HEK293 (cell line): ENCODE measurements at regions of chr17 and their contacts with region 1.

Region 1: DNA sequence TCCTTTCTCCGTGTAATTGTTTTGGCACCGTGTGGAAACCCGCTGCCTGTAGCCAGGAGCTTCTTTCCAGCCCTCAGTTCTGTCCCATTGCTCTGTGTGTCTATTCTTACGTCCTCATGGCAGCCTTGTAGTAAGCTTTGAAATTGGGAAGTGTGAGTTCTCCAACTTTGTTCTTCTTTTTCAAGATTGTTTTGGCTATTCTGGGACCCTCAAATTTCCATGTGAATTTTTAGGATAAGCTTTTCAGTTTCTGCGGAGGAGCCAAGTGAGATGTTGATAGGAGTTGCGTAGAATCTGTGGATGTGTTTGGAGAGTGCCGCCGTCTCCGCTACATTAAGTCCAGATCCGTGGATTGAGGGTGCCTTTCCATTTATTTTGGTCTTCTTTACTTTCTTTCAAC is 15.2 kb downstream of the CHMP6 start:
- H3K4me3 ChIP-seq: no peak overlapping the region
- H3K27ac ChIP-seq: no peak overlapping the region
- H3K4me1 ChIP-seq: peaks cover 9% of the 10 kb centered on the region
- CTCF ChIP-seq: no peak

Region 2: DNA sequence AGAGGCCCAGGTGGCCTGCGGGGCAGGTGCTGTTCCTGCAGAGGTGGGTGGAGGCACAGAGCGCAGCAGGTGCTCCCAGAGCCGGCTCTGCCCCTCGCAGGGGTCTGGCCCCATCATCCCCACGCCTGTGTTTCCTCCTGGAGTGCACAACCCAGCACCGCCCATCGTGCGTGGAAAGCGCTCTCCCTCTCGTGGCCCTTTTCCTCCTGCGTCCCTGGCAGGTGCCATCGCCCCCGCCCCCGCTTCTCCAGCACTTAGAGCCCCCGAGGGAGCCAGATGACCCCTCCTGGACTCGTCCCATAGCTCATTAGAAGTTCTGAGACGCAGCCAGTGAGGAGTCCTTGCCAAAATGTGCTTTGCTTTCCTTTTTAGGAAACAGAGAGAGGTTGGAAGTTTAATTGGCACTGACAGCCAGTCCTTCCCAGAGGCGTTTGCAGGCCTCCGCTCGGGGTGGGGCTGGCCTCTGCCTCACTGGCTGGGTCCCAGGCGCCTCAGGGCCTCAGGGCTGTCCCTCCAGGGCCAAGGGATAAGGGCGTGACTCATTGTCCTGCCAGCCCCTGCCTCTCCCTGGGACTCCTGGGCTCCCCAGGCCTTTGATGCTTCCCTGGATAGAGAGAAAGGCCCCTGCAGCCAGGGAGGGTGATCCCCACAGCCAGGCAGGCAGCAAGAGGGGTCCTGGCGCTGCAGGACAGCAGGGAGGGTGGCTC is 47.4 kb before region 1 on chr17:
- CTCF ChIA-PET with region 1: no interaction called
- POLR2A ChIA-PET with region 1: no interaction called
- H3K4me3 ChIP-seq: no peak overlapping the region
- H3K27ac ChIP-seq: no peak overlapping the region
- H3K4me1 ChIP-seq: no peaks in the 10 kb centered on the region; the same call in 1 of the 2 replicates
- CTCF ChIP-seq: no peak

Region 3: DNA sequence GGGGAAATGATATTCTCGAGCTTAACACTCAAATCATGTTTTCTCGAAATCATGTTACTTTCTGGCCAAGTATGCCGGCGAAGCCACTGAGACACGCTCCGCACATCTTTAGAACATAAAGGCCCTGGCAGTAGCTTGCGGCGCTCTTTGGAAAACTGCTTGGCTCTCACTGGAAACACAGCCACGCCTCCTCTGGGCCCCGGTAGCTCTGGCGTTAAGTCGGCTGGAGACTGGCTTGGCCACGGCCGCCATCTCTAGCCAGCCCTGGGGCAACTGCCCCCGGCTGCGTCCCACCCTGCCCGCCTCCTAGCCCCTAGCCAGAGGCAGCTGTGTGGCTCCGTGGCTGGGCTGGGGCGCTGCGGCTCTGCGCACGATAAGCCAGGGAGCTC is 18.8 kb after region 1 on chr17:
- CTCF ChIA-PET with region 1: interaction called, 20 read pairs
- POLR2A ChIA-PET with region 1: interaction called, 6 read pairs
- H3K4me3 ChIP-seq: no peak overlapping the region
- H3K27ac ChIP-seq: no peak overlapping the region
- H3K4me1 ChIP-seq: no peaks in the 10 kb centered on the region
- CTCF ChIP-seq: no peak